BJ (cell line): ENCODE measurements at regions of chr6 and their contacts with region 1.

Region 1: DNA sequence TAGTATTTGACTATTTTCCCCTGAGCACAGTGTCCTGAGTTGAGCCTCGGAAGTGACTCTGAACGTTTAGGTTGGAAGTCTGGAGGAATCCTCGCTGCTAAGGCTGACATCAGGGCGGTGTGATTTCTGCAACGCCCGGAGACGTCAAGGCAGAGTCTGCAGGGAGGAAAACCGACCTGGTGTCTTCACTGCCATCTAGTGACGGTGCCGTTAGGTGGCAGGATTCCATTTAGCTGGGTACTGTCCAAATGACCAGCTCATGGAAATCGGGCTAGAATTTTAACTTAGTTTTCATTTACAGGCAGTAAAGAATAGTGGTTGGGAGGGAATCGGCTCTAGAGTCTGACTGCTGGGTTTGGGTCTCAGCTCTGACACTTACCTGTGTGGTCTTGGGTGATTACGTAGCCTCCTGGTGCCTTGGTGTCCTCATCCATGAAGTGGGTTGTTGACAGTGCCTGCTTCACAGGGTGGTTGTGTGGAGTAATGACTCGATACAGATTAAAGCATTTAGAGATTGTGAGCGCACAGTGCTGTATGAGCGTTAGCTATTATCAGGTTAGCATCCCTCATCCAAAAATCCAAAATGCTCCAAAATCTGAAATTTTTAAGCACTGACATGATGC is 35.0 kb downstream of the FOXF2 start:
- DNase-seq: no peak
- H3K4me3 ChIP-seq: no peak overlapping the region
- H3K27me3 ChIP-seq: peaks cover 2% of the 10 kb centered on the region; the same call in 1 of the 2 replicates
- CTCF ChIP-seq: peak; percentile 81

Region 2: GRCh38 chr6:797479-798077 is 626.8 kb before region 1 on chr6:
- CTCF ChIA-PET with region 1: interaction called, 20 read pairs
- POLR2A ChIA-PET with region 1: no interaction called
- DNase-seq: no peak
- H3K4me3 ChIP-seq: no peak overlapping the region
- H3K27me3 ChIP-seq: peaks cover 14% of the 10 kb centered on the region
- CTCF ChIP-seq: peak; percentile 69

Region 3: DNA sequence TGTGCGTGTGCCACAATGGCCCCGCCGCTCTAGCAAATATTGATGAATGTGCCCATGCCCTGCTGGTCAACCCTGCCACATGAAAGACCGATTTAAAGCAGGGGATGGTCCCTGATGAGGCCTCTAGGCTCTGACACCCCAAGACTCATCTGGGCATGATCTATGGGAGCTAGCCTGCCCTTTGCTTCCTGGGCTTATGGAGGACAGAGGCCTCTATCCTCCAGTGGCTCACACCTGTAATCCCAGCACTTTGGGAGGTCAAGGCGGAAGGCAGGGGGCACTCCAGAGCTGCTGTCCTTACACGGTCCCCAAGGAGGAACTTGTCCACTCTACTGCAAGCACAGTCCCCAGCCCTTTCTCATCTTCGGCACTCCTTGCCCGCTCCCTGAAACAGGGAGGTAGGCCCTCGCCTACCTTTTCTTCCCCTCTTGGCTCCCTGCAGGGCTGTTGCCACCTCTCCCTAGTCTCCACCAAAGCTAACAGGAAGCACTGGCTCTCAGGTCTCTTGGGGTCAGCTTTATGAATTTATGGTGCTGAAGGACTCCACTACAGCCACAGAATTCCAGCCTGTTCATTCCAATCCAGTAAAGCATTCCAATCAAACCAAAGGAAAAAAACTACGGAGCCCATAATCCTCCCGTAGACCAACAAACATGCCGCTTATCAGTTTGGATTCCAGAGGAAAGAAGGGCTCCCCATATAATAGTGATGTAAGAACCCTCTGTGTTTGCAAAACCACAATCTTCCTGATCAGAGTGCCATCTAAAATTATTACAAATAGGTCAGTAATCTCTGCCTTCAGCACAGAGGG is 161.2 kb before region 1 on chr6:
- CTCF ChIA-PET with region 1: no interaction called
- POLR2A ChIA-PET with region 1: no interaction called
- DNase-seq: no peak
- H3K4me3 ChIP-seq: no peak overlapping the region
- H3K27me3 ChIP-seq: no peaks in the 10 kb centered on the region
- CTCF ChIP-seq: no peak

Region 4: GRCh38 chr6:1406306-1407072 is 17.9 kb before region 1 on chr6:
- CTCF ChIA-PET with region 1: interaction called, 45 read pairs
- POLR2A ChIA-PET with region 1: no interaction called
- DNase-seq: peak; percentile 50
- H3K4me3 ChIP-seq: no peak overlapping the region
- H3K27me3 ChIP-seq: no peaks in the 10 kb centered on the region
- CTCF ChIP-seq: peak; percentile 53

Region 5: GRCh38 chr6:1436334-1437306 is 12.2 kb after region 1 on chr6:
- CTCF ChIA-PET with region 1: interaction called, 53 read pairs
- POLR2A ChIA-PET with region 1: no interaction called
- DNase-seq: peak; percentile 23
- H3K4me3 ChIP-seq: no peak overlapping the region
- H3K27me3 ChIP-seq: no peaks in the 10 kb centered on the region
- CTCF ChIP-seq: peak; percentile 73

Region 6: GRCh38 chr6:1515280-1515679 is 90.9 kb after region 1 on chr6:
- CTCF ChIA-PET with region 1: no interaction called
- POLR2A ChIA-PET with region 1: no interaction called
- DNase-seq: no peak
- H3K4me3 ChIP-seq: no peak overlapping the region
- H3K27me3 ChIP-seq: peaks cover 8% of the 10 kb centered on the region
- CTCF ChIP-seq: no peak

Region 7: DNA sequence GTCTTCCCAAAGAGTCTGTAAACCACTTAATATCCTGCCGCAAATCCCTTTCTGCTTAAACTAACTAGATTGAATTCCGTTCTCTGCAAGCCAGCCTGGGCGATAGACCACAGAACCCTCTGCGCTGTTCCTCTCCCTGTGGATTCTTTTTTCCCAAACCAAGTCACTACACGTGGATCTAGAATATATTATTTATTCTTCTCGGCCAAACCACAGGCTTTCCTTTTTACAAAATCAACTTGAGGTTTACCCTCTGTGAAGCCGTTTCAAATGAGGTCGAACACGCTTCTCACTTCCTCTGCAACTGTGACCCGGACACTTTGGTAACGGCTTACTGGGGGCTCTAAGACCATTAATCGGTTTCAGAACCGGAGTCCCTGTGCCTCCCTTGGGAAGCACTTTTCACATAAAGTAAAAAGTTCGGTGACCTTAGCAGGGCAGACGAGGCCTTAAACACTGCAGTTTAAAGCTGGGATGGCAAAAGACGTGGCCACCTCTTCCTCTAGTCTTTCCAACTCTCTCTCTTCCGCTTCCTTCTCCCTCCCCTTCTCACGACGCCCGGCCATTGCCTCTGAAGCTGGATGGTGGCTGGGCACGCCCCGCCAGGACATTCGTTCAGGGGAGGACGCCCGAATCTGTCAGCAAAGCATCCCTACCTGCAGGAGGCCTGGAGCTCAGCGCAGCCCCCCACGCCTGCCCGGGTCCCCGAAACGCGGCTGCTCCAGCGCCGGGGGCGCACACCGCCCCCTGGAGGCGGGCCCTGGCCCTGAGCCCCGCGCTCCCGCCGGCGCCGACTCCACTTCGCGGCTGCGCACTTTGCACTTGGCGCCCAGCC is 130.3 kb after region 1 on chr6:
- CTCF ChIA-PET with region 1: no interaction called
- POLR2A ChIA-PET with region 1: no interaction called
- DNase-seq: no peak
- H3K4me3 ChIP-seq: peak overlapping the region; percentile 62
- H3K27me3 ChIP-seq: no peaks in the 10 kb centered on the region
- CTCF ChIP-seq: peak; percentile 61